Heart left ventricle (tissue), 16 donors: ENCODE measurements at regions of chr17 and their contacts with region 1.

Region 1: DNA sequence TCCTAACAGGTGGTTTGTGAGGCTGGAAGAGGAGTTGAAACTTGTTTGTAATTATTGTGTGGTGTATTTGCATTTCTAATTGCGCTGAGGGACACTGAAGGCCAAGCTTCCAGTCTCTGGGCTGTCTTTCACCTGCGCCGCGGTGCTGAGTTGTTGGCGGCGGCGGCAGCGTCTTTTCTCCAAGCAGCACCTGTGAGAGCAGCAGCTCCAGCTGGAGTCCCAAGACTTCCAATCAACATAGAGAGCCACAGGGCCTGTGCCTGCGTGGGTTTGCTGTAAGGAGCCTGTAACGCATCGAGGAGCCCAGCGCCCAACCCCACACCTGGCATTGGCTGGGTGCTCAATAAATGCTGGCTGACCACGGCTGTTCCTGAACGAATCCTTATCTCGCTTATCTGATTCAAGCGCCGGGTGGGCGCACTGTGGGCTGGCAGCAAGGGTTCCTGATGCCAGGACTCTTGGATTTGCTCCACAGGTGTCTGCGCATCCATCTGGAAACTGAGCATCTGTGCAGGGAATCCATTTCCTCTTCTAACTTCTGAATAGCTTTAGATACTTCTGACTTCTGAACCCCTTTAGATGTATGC is 138.1 kb downstream of the ASIC2 start:
- DNase-seq: no peak
- ATAC-seq: no peak
- H3K4me3 ChIP-seq: no peak overlapping the region
- H3K27ac ChIP-seq: no peak overlapping the region
- H3K4me1 ChIP-seq: peaks cover 0 to 7% (median 0%) of the 10 kb centered on the region in 12 donors
- H3K27me3 ChIP-seq: peaks cover 0 to 36% (median 3%) of the 10 kb centered on the region in 9 donors
- CTCF ChIP-seq: no peak
- POLR2A ChIP-seq: no peak

Region 2: DNA sequence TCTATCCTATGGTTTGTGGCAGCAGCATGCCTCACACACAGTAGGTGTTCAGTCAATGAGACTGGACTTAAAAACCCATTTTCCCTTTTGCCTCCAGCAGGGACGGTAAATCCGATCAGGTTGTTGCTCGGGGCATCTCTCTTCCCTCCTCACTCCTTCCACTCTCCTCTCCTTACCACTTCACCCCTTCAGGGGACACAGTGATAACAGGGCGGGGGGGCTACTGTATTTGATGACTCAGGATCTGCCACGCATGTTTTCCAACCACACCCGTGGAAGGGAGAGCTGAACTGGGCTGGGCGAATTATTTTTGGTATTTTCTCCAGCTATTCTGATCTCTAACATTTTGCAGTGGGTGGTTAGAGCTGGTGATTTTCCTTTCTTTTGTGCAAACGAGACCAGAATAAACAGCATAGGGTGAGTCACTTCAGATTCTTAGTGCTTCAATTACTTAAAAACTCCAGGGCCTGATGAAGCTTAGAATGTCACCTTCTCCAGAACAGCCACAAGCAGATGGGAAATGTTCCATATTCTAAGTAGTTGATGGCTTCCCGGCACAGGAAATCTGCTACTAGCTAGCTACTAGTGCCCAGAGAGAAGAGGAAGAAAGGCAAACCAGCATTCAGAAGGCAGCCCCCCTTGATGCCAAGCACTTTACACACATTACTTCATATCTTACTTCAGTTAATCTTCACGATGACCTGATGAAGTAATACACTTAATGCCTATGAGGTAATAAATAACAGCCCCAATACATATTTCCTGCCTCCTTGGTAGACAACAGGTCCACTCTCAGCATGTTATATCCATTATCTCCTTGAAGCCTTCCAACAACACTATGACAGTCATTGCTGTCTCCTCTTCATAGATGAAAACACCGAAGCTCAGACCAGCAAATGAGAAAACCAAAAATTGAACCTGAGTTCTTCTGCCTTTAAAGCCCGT is 64.0 kb after region 1 on chr17:
- intact Hi-C with region 1: loop called in 1 of 10 experiments (anchors 10 kb)
- DNase-seq: no peak
- ATAC-seq: no peak
- H3K4me3 ChIP-seq: no peak overlapping the region
- H3K27ac ChIP-seq: no peak overlapping the region
- H3K4me1 ChIP-seq: peaks cover 0 to 5% (median 0%) of the 10 kb centered on the region in 12 donors
- H3K27me3 ChIP-seq: peaks cover 0 to 23% (median 0%) of the 10 kb centered on the region in 9 donors
- CTCF ChIP-seq: no peak
- POLR2A ChIP-seq: no peak